AG04450 (cell line): ENCODE measurements at regions of chr3 and their contacts with region 1.

Region 1: DNA sequence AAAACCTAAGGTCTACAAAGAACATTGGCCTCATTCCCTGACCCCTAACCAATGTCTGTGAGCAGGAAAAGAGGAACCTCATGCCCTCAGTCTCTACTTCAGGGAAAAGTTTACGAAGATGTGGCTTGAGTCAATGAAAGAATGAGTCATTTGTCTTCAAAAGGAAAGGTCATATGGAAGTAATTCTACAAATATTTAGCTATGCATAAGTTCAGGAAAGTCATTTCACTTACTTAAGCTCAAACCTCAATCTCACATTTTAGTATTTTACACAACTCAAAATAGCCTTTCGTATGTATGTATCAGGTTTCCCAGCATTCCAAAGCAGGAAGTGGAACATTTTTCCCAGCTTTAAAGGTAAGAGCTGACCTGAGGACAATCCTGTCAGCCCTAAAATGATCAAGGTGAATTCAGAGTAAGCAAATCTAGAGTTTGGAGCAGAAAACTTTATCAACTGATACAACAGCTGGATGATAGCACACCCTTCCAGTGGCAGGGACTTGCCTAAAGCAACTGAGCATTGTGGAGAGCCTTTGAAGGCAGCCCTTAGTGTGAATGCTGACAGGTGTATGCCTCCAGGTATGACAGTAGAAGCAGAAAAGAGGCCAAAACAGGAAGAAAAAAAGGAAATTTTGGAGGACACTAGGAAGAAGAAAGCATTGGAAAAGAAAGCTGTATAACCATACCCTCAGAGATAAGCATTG is 53.9 kb upstream of the ACKR4 start:
- DNase-seq: peak; percentile 84
- H3K4me3 ChIP-seq: no peak overlapping the region
- H3K27ac ChIP-seq: peak overlapping the region; percentile 95
- H3K27me3 ChIP-seq: no peaks in the 10 kb centered on the region
- CTCF ChIP-seq: no peak

Region 2: DNA sequence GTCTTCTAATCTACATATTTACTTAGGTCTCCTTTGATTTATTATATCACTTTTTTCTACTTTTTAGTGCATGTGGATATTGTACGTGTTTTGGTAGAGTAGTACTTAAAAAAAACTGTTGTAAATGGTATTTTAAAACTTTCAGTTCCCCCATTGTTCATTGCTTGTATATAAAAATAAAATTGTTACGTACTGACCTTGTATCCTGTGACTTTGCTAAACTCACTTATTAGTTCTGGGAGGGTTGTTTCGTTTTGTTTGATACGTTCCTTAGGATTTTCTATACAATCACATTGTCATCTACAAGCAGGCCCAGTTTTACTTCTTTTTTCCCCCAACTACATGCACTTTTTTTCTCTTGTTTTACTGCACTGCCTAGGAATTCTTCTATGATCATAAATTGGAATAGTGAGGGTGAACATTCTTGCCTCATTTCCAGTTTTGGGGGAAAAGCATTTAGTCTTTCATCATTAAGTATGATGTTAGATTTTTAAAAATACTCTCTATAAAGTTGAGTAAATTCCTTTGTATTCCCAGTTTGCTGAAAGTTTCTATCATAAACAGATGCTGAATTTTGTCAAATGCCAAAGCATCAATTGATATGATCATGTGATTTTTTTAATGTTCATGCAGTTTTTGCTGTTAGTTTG is 20.4 kb after region 1 on chr3:
- CTCF ChIA-PET with region 1: no interaction called
- POLR2A ChIA-PET with region 1: no interaction called
- DNase-seq: no peak
- H3K4me3 ChIP-seq: no peak overlapping the region
- H3K27ac ChIP-seq: no peak overlapping the region
- H3K27me3 ChIP-seq: no peaks in the 10 kb centered on the region
- CTCF ChIP-seq: no peak

Region 3: GRCh38 chr3:132573797-132574211 is 30.6 kb after region 1 on chr3:
- CTCF ChIA-PET with region 1: no interaction called
- POLR2A ChIA-PET with region 1: no interaction called
- DNase-seq: no peak
- H3K4me3 ChIP-seq: no peak overlapping the region
- H3K27ac ChIP-seq: no peak overlapping the region
- H3K27me3 ChIP-seq: no peaks in the 10 kb centered on the region
- CTCF ChIP-seq: no peak

Region 4: DNA sequence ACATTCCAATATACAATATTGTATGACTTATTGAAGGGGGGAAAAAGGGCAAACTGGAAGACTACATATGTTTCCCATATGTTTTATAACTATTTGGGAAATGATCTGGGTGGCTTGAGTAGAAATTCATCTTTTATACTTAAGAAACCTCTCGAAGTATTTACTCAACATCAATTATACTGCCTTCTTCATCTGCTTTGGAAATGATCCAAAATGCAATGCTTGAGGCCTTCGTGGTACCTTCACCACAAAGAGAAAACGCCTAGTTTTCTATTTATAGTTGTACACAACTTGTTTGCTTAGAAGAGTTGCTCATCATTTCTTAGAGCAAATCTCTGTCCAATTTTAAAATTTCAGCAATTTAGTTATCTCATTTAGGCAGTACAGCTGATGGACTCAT is 72.7 kb after region 1 on chr3:
- CTCF ChIA-PET with region 1: interaction called, 11 read pairs
- POLR2A ChIA-PET with region 1: no interaction called
- DNase-seq: no peak
- H3K4me3 ChIP-seq: no peak overlapping the region
- H3K27ac ChIP-seq: no peak overlapping the region
- H3K27me3 ChIP-seq: no peaks in the 10 kb centered on the region
- CTCF ChIP-seq: no peak